OCI-LY7 (cell line): ENCODE measurements at regions of chr11 and their contacts with region 1.

Region 1: DNA sequence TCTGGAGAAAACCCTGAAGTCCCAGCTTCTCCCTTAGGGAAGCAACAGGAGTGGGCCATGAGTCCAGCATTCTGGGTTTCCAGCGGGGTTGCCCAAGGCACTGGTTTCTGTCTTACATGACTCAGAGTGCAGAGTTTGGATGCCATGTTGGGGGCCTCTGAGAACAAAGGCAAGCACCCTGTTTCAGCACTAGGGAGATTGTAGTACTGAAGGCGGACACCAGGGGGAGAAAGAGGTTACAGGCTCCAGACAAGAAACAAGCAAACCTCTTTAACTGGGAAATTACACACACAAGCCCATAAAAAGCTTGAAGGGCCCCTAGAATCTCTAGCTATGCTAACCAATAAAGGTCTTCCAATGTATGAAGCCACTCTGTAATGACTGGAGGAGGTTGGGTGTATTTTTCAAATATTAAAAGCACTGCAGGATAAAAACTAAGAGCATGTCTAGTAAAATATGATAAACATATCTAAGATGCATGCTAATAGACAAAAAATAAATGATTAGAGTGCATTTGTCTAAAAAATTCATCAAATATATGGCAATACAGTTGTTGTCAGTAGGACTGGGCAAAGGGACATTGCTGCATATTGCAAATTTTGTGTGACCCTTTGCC is 7.1 kb downstream of the MS4A6E start:
- DNase-seq: peak; percentile 73
- H3K4me3 ChIP-seq: no peak overlapping the region
- H3K27ac ChIP-seq: no peak overlapping the region
- H3K4me1 ChIP-seq: no peaks in the 10 kb centered on the region
- CTCF ChIP-seq: peak; percentile 88

Region 2: DNA sequence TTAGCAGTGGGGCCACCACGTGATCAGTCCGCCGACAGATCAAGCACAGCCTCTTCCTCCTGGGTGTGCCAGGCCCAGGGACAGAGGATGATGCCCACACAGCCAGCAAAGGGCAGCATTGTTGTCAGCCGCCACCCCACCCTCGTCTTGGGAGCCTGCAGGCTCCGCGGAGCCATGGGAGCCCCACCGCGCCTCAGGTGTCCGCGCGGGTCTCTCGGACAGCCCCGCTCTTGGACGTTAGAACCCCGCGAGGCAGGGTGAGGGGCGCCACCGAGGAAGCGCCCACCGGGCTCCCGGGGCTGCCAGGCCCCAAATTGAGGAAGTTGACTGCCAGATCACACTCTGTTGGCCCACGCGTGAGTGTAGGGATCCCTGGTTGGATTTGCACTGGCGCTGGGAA is 281.4 kb after region 1 on chr11:
- CTCF ChIA-PET with region 1: no interaction called
- POLR2A ChIA-PET with region 1: no interaction called
- intact Hi-C with region 1: loop called (anchors 1 kb)
- DNase-seq: no peak
- H3K4me3 ChIP-seq: no peak overlapping the region
- H3K27ac ChIP-seq: no peak overlapping the region
- H3K4me1 ChIP-seq: peaks cover 4% of the 10 kb centered on the region
- CTCF ChIP-seq: no peak